ENCODE measurements at regions of chr1 and their contacts with region 1.

Region 1: DNA sequence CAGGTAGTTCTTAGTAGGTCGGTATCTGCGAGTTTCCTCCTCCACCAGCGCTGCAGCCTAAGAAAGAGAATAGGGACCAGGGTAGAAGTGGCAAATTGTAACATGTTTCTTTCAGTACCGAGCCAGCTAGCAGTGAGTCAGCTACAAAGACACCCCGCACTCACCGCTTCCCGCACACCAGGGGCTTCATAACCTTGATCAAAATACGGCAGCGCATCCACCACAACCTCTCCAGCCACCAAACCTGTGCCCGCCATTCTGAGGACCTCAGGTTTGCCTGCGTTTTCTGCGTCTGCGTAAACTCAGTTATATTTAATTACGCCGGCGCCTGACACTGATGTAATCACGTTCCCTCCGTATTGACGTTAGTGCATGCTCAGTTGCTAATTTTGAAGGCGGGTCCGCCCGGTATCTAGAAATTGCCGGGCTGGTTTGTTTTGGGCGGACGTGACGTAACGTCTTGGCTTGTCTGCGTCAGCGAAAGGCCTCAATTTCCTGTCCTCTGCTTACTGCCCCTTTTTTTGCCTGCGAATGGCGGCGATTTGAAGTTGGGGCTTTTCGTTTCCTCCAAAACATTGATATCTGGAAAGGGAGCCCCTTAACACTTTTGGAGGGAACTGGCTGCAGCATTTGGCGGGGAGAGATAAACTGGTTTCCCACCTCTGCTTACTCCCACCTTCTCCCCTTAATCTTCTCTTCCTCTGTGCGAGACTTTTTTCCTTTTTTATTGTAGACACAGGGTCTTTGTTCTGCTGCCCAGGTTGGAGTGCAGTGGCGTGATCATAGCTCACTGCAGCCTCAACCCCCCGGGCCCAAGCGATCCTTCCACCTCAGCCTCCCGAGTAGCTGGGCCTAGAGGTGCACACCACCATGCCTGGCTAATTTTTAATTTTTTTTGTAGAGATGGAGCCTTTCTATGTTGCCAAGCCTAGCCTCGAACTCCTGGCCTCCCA is at the start of gene BCAS2:
- DNase-seq: peak; percentile 98
- ATAC-seq: peak; percentile 95
- H3K4me3 ChIP-seq: peak within 1 kb of the TSS; percentile 59 to 91 (median 85)
- H3K4me3 Mint-ChIP-seq: peak within 1 kb of the TSS; percentile 99
- H3K27ac ChIP-seq: peak within 1 kb of the TSS; percentile 87 to 95
- H3K27ac Mint-ChIP-seq: peak within 1 kb of the TSS; percentile 99
- H3K4me1 ChIP-seq: peaks cover 15 to 18% of the 10 kb centered on the region in 2 donors
- H3K4me1 Mint-ChIP-seq: peaks cover 30% of the 10 kb centered on the region
- H3K27me3 ChIP-seq: no peaks in the 10 kb centered on the region
- H3K27me3 Mint-ChIP-seq: no peaks in the 10 kb centered on the region
- CTCF ChIP-seq: no peak
- total RNA-seq, gene BCAS2: 27.6 and 30.6 TPM in 2 replicates

Region 2: DNA sequence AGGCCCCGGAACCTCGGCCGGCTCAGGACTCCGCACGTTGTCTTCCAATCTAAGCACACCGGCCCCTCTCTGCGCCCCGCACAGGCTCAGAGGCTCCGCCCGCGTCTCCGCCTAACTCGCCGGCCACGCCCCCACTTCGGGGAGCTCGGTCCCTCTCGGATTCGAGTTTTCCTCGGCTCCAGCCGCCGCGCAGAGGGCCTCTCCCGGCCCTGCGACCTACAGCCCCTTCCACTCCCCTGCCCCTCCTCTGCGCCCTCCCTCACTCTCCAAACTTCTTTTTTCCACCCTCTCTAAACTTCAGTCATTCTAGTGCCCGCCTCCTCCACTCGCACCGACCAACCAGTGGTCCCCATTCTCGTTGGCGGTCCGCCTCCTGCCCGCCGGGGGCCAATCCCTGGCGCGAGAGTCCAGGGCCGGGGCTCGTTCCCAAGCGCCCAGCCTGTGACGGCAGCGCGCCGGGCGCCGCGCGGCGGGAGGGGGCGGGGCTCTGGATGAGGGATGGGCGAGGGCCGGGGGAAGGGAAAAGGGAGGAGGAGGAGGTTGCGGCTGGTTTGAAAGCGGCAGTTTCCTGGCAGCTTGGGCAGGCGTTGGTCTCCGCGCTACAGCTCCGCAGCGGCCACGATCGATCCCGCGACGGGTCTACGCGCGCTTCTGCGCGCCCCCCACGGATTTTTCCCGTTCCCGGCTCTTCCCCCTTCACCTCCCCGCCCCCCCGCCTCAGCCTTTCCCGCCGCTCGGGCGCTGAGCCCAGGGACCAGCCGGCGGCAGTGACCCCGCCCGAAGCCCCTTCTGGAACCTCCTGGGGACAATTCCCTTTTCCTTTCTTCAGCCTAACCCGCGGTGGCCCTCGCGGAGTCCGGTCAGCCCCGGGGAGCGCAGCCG is 1191.4 kb before region 1 on chr1 and contains the start of gene MAGI3:
- CTCF ChIA-PET with region 1: no interaction called
- POLR2A ChIA-PET with region 1: no interaction called
- intact Hi-C with region 1: loop called (anchors 2 kb)
- DNase-seq: peak; percentile 88
- ATAC-seq: peak; percentile 96
- H3K4me3 ChIP-seq: peak within 1 kb of the TSS; percentile 22 to 83 (median 76)
- H3K4me3 Mint-ChIP-seq: peak within 1 kb of the TSS; percentile 89
- H3K27ac ChIP-seq: no peak within 1 kb of the TSS
- H3K27ac Mint-ChIP-seq: peak within 1 kb of the TSS; percentile 42
- H3K4me1 ChIP-seq: peaks cover 16 to 19% of the 10 kb centered on the region in 2 donors
- H3K4me1 Mint-ChIP-seq: peaks cover 21% of the 10 kb centered on the region
- H3K27me3 ChIP-seq: peaks cover 0 to 22% (median 15%) of the 10 kb centered on the region in 4 experiments
- H3K27me3 Mint-ChIP-seq: peaks cover 43% of the 10 kb centered on the region
- CTCF ChIP-seq: no peak
- total RNA-seq, gene MAGI3: 0.67 and 0.83 TPM in 2 replicates

Region 3: GRCh38 chr1:113904674-113905434 is 676.8 kb before region 1 on chr1 and contains the starts of genes AP4B1 and DCLRE1B:
- CTCF ChIA-PET with region 1: no interaction called
- POLR2A ChIA-PET with region 1: no interaction called
- intact Hi-C with region 1: loop called (anchors 1 kb)
- DNase-seq: peak; percentile 99
- ATAC-seq: peak; percentile 90
- H3K4me3 ChIP-seq: peak within 1 kb of the TSS; percentile 87 to 98 (median 92)
- H3K4me3 Mint-ChIP-seq: peak within 1 kb of the TSS; percentile 92
- H3K27ac ChIP-seq: peak within 1 kb of the TSS; percentile 87 to 93
- H3K27ac Mint-ChIP-seq: peak within 1 kb of the TSS; percentile 99
- H3K4me1 ChIP-seq: peaks cover 32 to 39% of the 10 kb centered on the region in 2 donors
- H3K4me1 Mint-ChIP-seq: peaks cover 43% of the 10 kb centered on the region
- H3K27me3 ChIP-seq: no peaks in the 10 kb centered on the region
- H3K27me3 Mint-ChIP-seq: no peaks in the 10 kb centered on the region
- CTCF ChIP-seq: peak; percentile 71
- total RNA-seq, gene AP4B1: 51.5 and 52.2 TPM in 2 replicates
- total RNA-seq, gene DCLRE1B: 4.3 and 4.8 TPM in 2 replicates

Region 4: DNA sequence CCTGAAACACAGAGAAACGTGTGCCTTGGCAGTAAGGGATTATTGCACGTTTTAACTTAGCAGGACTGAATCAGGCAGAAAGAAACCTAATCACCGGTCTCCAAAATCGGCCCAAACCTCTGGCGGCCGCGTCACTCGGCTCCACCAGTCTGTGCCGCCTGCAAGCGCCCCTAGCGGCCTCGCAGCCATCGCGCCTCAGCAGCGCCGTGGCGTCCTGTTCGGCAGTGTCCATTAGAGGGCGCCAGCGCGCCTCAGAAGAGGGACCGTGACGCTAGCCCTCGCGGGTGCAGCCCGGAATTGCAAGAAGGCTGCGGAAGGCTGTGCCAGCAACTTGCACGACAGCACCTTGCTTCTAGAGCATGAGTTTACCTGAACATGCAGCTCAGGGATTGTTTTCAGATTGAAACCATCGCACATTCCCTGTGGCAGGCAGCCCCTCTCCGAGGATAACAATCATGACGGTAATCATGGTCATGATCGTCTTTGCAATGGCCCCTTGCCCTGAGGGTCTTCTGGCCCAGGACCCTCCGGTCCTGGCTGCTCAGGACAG is 235.1 kb before region 1 on chr1:
- CTCF ChIA-PET with region 1: interaction called, 9 read pairs
- POLR2A ChIA-PET with region 1: no interaction called
- intact Hi-C with region 1: loop called (anchors 2 kb)
- DNase-seq: peak; percentile 98
- ATAC-seq: peak; percentile 100
- H3K4me3 ChIP-seq: peak overlapping the region; percentile 24 to 61 (median 53)
- H3K4me3 Mint-ChIP-seq: peak overlapping the region; percentile 97
- H3K27ac ChIP-seq: no peak overlapping the region
- H3K27ac Mint-ChIP-seq: peak overlapping the region; percentile 62
- H3K4me1 ChIP-seq: peaks cover 0 to 13% of the 10 kb centered on the region in 2 donors
- H3K4me1 Mint-ChIP-seq: peaks cover 10% of the 10 kb centered on the region
- H3K27me3 ChIP-seq: peaks cover 0 to 3% (median under 1%) of the 10 kb centered on the region in 4 experiments
- H3K27me3 Mint-ChIP-seq: peaks cover 14% of the 10 kb centered on the region
- CTCF ChIP-seq: peak; percentile 100

Region 5: DNA sequence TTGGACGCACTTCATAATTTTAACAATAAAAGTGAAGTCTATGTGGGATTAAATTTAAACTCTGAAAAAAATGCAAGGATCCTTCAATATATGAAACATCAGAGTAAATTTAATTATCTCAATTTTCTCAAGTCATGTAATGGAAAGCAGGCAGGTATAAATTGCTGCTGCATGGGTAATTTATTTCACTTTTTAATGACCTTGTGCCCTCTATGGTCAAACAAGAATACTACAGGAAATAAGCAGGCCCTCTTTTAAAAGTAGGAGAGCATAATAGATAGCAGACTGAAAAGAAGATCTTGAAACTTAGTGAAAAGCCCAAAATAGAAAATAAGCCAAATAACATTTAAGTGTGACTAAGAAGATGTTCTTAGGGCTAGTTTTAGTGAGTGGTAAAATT is 23.1 kb before region 1 on chr1:
- CTCF ChIA-PET with region 1: interaction called, 6 read pairs
- POLR2A ChIA-PET with region 1: no interaction called
- intact Hi-C with region 1: loop called (anchors 2 kb)
- DNase-seq: peak; percentile 49
- ATAC-seq: peak; percentile 63
- H3K4me3 ChIP-seq: peak overlapping the region in 1 of 5 experiments; percentile 3
- H3K4me3 Mint-ChIP-seq: peak overlapping the region; percentile 3
- H3K27ac ChIP-seq: peak overlapping the region in 1 of 2 donors; percentile 21
- H3K27ac Mint-ChIP-seq: peak overlapping the region; percentile 16
- H3K4me1 ChIP-seq: peaks cover 31% of the 10 kb centered on the region in 2 donors
- H3K4me1 Mint-ChIP-seq: peaks cover 31% of the 10 kb centered on the region
- H3K27me3 ChIP-seq: no peaks in the 10 kb centered on the region
- H3K27me3 Mint-ChIP-seq: no peaks in the 10 kb centered on the region
- CTCF ChIP-seq: peak; percentile 75

Region 6: GRCh38 chr1:114716304-114717170 is 134.9 kb after region 1 on chr1 and contains the start of gene NRAS:
- CTCF ChIA-PET with region 1: no interaction called
- POLR2A ChIA-PET with region 1: no interaction called
- intact Hi-C with region 1: loop called (anchors 1 kb)
- DNase-seq: peak; percentile 96
- ATAC-seq: peak; percentile 96
- H3K4me3 ChIP-seq: peak within 1 kb of the TSS; percentile 69 to 95 (median 89)
- H3K4me3 Mint-ChIP-seq: peak within 1 kb of the TSS; percentile 99
- H3K27ac ChIP-seq: peak within 1 kb of the TSS; percentile 97
- H3K27ac Mint-ChIP-seq: peak within 1 kb of the TSS; percentile 99
- H3K4me1 ChIP-seq: peaks cover 15 to 16% of the 10 kb centered on the region in 2 donors
- H3K4me1 Mint-ChIP-seq: peaks cover 29% of the 10 kb centered on the region
- H3K27me3 ChIP-seq: no peaks in the 10 kb centered on the region
- H3K27me3 Mint-ChIP-seq: no peaks in the 10 kb centered on the region
- CTCF ChIP-seq: no peak
- total RNA-seq, gene NRAS: 35.0 and 35.3 TPM in 2 replicates

Region 7: GRCh38 chr1:114780344-114781226 is 199.0 kb after region 1 on chr1 and contains the start of gene SIKE1:
- CTCF ChIA-PET with region 1: no interaction called
- POLR2A ChIA-PET with region 1: no interaction called
- intact Hi-C with region 1: loop called (anchors 1 kb)
- DNase-seq: peak; percentile 94
- ATAC-seq: peak; percentile 97
- H3K4me3 ChIP-seq: peak within 1 kb of the TSS; percentile 94 to 99 (median 96)
- H3K4me3 Mint-ChIP-seq: peak within 1 kb of the TSS; percentile 100
- H3K27ac ChIP-seq: peak within 1 kb of the TSS; percentile 75 to 84
- H3K27ac Mint-ChIP-seq: peak within 1 kb of the TSS; percentile 98
- H3K4me1 ChIP-seq: peaks cover 9 to 10% of the 10 kb centered on the region in 2 donors
- H3K4me1 Mint-ChIP-seq: peaks cover 26% of the 10 kb centered on the region
- H3K27me3 ChIP-seq: no peaks in the 10 kb centered on the region
- H3K27me3 Mint-ChIP-seq: peaks cover 9% of the 10 kb centered on the region
- CTCF ChIP-seq: no peak
- total RNA-seq, gene SIKE1: 44.8 and 47.8 TPM in 2 replicates

Measured in B cell (primary cell).